ENCODE measurements at regions of chr20 and their contacts with region 1.

Region 1: DNA sequence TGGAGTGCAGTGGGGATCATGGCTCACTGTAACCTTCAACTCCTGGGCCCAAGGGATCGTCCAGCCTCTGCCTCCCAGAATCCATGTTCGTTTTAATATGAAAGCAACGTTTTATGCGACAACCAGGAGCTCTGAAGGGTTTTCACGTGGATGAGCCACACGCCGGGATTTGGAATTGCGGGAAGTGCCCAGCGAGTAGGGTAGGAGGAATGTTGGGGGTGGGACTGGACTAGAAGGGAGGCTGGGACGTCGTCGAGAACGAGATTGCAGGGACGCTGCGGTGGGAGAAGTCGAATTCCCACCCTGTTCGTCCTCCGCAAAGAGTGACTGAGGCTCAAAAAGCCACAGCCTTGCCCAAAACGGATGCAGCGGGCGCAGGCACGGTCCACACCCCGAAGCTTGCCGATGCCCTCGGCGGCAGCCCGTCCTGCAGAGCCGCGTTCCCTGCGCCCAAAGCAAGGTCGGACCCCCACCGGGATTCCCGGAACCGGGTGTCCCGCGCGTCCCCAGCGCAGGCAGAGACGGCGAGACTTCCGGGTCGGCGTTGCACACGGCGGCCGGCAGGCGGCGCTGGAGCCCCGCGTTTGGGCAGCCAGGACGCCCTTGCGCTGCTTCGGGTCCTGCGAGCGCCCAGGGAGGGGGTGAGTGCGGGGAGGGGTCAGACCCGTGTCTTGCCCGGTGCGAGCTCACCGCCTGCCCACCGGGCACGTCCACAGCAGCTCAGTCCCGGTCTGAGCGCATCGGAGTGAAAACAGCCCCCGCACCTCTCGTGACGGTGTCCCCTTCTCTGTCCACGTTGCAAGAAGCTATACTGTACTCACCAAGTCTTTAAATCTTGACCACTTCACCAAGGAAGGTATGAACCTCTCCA is 87.8 kb downstream of the DHX35 start:
- DNase-seq: peak; percentile 88
- CTCF ChIP-seq: peak; percentile 99

Region 2: GRCh38 chr20:38920851-38921250 is 129.1 kb before region 1 on chr20:
- CTCF ChIA-PET with region 1: interaction called, 212 read pairs
- POLR2A ChIA-PET with region 1: no interaction called
- DNase-seq: no peak
- CTCF ChIP-seq: no peak

Region 3: DNA sequence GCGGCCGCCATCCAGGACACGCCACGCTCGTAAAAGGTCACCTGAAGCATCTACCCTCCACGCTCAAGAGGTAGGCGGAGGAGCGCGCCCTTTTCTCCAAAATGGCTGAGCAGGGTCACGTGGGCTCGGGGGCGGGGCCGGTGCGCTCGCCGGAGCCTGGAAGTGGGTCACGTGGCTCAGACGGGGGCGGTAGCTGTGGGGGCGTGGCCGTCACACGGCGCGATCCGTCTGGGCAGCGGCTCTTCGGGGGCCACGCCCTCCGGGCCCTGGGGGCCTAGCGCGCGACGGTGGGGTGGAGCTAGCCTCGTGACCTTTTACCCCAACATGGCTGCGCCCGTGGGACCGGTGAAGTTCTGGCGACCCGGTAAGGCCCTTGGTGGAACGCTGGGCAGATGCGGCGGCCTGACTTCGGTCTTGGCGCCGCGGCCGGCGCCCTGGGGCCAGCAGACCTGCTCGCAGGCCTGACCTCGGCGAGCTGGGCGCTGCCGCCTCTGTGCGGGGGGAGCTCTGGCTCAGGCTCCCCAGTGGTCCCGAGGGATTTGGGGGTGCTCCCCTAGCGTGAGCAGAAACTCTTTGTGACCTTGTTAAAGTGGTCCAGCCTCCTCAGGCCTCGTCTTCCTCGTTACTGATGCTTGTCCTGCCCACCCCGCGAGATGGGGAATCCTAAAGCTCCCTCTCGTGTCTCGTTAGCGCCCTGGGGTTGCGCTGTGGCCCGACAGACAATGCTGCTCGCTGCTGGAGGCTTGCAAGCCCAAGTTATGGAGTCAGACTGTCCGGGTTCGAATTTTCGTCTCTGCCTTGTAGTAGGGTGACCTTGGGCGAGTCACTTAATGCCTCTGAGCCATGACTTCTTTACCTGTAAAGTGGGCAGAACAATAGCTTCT is 87.6 kb before region 1 on chr20 and contains the start of gene DHX35:
- CTCF ChIA-PET with region 1: interaction called, 16 read pairs
- POLR2A ChIA-PET with region 1: no interaction called
- DNase-seq: peak; percentile 100
- CTCF ChIP-seq: peak; percentile 60

Region 4: DNA sequence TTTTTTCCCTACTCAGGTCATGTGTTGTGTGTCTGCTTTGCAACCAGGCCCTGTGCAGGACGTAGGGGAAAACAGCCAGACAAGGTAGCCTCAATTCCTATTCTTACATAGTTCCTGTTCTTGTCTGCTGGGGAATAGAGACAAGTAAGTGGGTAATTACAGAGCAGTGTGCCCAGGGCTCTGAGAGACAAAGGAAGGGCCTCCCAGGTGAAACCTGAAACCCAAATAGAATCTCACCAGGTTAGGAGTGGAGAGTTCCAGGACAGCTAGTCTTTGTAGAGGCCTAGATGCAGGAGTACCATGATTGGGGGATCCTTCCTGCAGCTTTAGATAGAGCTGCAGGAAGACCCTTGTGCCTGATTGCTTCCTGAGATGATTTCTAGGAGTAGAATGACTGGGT is 39.4 kb before region 1 on chr20:
- CTCF ChIA-PET with region 1: interaction called, 13 read pairs
- POLR2A ChIA-PET with region 1: no interaction called
- DNase-seq: no peak
- CTCF ChIP-seq: no peak

Region 5: GRCh38 chr20:39075731-39076130 is 25.8 kb after region 1 on chr20:
- CTCF ChIA-PET with region 1: interaction called, 136 read pairs
- POLR2A ChIA-PET with region 1: no interaction called
- DNase-seq: no peak
- CTCF ChIP-seq: no peak

Region 6: DNA sequence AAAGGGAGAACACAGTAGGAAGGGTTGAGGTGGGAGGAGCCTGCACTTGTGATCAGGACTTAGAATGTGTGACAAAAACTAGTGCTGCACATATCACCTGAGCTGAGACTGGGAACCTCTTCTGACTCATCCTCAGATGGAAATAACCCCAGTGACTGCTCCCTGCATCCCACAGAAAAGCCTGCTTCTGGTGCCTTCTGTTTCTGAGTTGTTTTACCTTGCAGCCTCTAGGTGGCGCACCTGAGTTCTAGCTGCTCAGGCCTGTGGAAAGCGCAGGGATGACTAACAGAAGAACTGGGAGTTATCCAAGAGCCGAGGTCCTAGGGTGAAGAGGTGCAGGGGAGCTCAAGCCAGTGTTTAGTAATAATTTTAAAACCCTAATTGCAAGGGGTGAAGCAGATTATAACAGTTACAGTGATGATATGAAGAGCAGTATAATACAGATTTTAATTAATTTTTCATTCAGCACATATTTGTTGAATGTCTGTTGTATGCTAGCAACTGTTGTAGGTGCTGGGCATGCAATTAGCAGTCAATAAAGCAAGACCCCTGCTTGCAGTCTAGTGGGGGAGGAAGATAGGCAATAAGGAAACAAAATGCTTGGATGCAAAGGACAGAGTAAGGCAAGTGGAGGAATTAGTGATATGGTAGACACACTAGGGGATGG is 214.7 kb after region 1 on chr20:
- CTCF ChIA-PET with region 1: no interaction called
- POLR2A ChIA-PET with region 1: no interaction called
- DNase-seq: peak; percentile 56
- CTCF ChIP-seq: peak; percentile 88

Measured in GM10248 (cell line).